ENCODE measurements at regions of chr1 and their contacts with region 1.

Region 1: GRCh38 chr1:171644805-171645483 is 7.5 kb downstream of the MYOC start:
- DNase-seq: peak in 9 of 10 donors; percentile 44 to 81 (median 68)
- H3K4me3 ChIP-seq: peak overlapping the region in 2 of 59 donors; percentile 4 to 12
- H3K27ac ChIP-seq: peak overlapping the region in 26 of 59 donors; percentile 1 to 93 (median 46)
- H3K27me3 ChIP-seq: no peaks in the 10 kb centered on the region
- CTCF ChIP-seq: peak; percentile 26 to 78 (median 66)

Region 2: GRCh38 chr1:171329251-171329650 is 315.7 kb before region 1 on chr1:
- intact Hi-C with region 1: no loop called
- DNase-seq: no peak
- H3K4me3 ChIP-seq: no peak overlapping the region
- H3K27ac ChIP-seq: no peak overlapping the region
- H3K27me3 ChIP-seq: no peaks in the 10 kb centered on the region
- CTCF ChIP-seq: no peak

Region 3: GRCh38 chr1:171422511-171422910 is 222.4 kb before region 1 on chr1:
- intact Hi-C with region 1: no loop called
- DNase-seq: no peak
- H3K4me3 ChIP-seq: no peak overlapping the region
- H3K27ac ChIP-seq: no peak overlapping the region
- H3K27me3 ChIP-seq: no peaks in the 10 kb centered on the region
- CTCF ChIP-seq: no peak

Region 4: GRCh38 chr1:171610385-171610784 is 34.6 kb before region 1 on chr1:
- intact Hi-C with region 1: no loop called
- DNase-seq: no peak
- H3K4me3 ChIP-seq: no peak overlapping the region
- H3K27ac ChIP-seq: no peak overlapping the region
- H3K27me3 ChIP-seq: no peaks in the 10 kb centered on the region
- CTCF ChIP-seq: no peak

Region 5: DNA sequence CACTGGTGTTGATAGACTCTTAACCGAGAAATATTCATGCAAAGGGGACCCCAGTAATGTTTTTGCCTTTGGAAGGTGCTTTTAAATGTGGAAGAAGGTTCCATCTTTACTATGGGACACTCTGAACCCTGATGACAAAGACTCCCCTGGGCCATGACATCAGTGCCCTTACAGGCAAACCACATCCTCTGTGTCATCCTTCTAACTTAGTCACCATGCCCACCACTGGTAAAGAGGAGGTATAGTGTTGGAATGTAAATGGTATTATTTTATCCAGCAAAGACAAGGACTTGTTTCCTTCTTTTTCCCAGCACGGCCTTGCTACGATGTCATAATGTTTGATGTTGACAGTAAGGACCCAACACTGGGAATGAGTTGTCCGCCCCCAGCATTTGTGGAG is 149.1 kb after region 1 on chr1:
- intact Hi-C with region 1: loop called in 1 of 2 experiments (anchors 10 kb)
- DNase-seq: no peak
- H3K4me3 ChIP-seq: no peak overlapping the region
- H3K27ac ChIP-seq: peak overlapping the region in 1 of 59 donors; percentile 61
- H3K27me3 ChIP-seq: no peaks in the 10 kb centered on the region
- CTCF ChIP-seq: no peak

Measured in dorsolateral prefrontal cortex (tissue), 120 donors.